ENCODE measurements at regions of chr6 and their contacts with region 1.

Region 1: DNA sequence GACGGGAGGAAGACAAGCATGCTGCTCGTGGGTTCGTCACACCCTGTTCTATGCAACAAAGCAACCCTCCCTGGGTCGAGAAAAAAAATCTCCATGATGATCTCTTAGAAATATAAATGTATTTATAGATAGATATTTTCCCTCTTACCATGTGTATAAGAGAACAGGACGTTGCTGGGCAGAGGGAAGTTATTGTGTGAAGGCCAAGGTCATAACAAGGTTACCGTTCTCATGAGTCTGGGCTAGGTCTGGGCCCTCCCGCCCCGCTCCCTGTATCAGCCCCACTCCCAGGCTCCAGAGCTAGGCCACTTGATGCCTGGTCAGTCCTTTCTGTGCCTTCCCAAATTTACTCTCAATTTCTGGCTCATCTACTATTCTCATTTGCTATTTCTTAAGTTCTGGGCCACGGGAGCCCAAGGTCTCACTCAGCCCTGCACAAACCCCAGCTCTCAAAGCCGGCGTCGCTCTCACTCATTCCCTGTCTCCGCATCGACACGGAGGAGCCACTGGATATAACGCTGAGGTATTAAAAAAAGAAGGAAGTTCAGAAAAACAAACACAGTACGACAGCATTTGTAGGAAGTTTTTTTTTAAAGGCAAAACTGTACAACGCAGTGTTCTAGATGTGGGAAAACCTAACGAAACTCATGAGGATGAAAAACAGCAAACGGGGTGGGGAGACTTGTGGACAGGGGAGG is 96.8 kb downstream of the PSMG4 start:
- DNase-seq: no peak
- H3K4me3 Mint-ChIP-seq: peak overlapping the region; percentile 66
- H3K27ac Mint-ChIP-seq: no peak overlapping the region
- H3K4me1 Mint-ChIP-seq: peaks cover 9% of the 10 kb centered on the region
- H3K27me3 Mint-ChIP-seq: peaks cover 50% of the 10 kb centered on the region

Region 2: GRCh38 chr6:3337521-3338350 is 17.8 kb before region 1 on chr6:
- intact Hi-C with region 1: loop called (anchors 2 kb)
- DNase-seq: no peak
- H3K4me3 Mint-ChIP-seq: no peak overlapping the region
- H3K27ac Mint-ChIP-seq: no peak overlapping the region
- H3K4me1 Mint-ChIP-seq: peaks cover 10% of the 10 kb centered on the region
- H3K27me3 Mint-ChIP-seq: peaks cover 5% of the 10 kb centered on the region